Activated CD4-positive, alpha-beta memory T cell treated with anti-CD3 and anti-CD28 coated beads for 36 hours (primary cell): ENCODE measurements at regions of chr2 and their contacts with region 1.

Region 1: GRCh38 chr2:73176881-73177644 is 25.3 kb upstream of the NOTO start:
- DNase-seq: peak; percentile 91
- H3K4me3 Mint-ChIP-seq: peak overlapping the region; percentile 77
- H3K27ac Mint-ChIP-seq: no peak overlapping the region
- H3K4me1 Mint-ChIP-seq: peaks cover 26% of the 10 kb centered on the region
- H3K27me3 Mint-ChIP-seq: peaks cover 31% of the 10 kb centered on the region

Region 2: GRCh38 chr2:72770879-72771461 is 406.1 kb before region 1 on chr2:
- CTCF ChIA-PET with region 1: interaction called, 3 read pairs
- POLR2A ChIA-PET with region 1: no interaction called
- intact Hi-C with region 1: loop called (anchors 5 kb)
- DNase-seq: peak; percentile 38
- H3K4me3 Mint-ChIP-seq: no peak overlapping the region
- H3K27ac Mint-ChIP-seq: no peak overlapping the region
- H3K4me1 Mint-ChIP-seq: no peaks in the 10 kb centered on the region
- H3K27me3 Mint-ChIP-seq: no peaks in the 10 kb centered on the region

Region 3: DNA sequence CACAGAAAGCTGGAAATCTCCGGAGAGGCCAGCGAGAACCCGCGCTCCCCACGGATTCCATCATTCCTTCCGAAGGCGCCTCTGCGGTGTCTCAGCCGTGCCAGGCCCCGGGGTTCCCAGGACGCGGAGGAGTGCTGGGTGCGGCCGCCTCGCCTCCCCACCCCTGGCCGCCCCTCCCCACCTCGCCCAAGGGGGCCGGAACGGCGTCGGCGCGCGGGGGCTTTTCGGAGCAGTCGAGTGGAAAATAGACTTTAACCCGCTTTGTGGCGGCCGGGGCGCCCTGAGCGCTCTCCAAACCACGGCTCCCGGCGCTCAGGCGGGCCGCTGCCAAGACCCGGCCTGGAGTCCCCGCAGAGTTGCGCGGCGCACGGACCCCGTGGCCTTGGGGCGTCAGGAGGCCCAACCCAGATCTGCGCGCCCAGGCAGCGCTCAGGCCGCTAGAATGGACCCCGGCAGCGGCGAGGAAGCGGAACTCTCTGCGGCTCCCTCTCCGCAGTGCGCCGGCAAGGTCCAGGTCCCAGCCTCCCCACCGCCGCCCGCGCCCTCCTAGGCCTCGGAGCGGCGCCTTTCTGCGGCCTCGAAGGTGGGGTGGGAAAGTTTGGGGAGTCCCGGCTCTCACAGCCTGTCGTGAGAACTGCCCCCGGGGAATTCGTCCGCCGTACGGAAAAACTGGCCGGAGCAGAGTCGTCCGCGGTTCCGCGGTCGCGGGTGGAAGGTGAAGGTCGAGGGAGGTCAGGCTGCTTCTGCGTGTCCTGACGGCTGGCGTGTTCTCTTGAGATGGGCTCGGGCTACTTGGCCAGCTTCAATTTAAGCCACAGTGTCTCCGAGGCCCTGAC is 260.9 kb before region 1 on chr2:
- CTCF ChIA-PET with region 1: interaction called, 10 read pairs
- POLR2A ChIA-PET with region 1: no interaction called
- intact Hi-C with region 1: no loop called
- DNase-seq: peak; percentile 61
- H3K4me3 Mint-ChIP-seq: peak overlapping the region; percentile 66
- H3K27ac Mint-ChIP-seq: no peak overlapping the region
- H3K4me1 Mint-ChIP-seq: peaks cover 26% of the 10 kb centered on the region
- H3K27me3 Mint-ChIP-seq: peaks cover 73% of the 10 kb centered on the region

Region 4: DNA sequence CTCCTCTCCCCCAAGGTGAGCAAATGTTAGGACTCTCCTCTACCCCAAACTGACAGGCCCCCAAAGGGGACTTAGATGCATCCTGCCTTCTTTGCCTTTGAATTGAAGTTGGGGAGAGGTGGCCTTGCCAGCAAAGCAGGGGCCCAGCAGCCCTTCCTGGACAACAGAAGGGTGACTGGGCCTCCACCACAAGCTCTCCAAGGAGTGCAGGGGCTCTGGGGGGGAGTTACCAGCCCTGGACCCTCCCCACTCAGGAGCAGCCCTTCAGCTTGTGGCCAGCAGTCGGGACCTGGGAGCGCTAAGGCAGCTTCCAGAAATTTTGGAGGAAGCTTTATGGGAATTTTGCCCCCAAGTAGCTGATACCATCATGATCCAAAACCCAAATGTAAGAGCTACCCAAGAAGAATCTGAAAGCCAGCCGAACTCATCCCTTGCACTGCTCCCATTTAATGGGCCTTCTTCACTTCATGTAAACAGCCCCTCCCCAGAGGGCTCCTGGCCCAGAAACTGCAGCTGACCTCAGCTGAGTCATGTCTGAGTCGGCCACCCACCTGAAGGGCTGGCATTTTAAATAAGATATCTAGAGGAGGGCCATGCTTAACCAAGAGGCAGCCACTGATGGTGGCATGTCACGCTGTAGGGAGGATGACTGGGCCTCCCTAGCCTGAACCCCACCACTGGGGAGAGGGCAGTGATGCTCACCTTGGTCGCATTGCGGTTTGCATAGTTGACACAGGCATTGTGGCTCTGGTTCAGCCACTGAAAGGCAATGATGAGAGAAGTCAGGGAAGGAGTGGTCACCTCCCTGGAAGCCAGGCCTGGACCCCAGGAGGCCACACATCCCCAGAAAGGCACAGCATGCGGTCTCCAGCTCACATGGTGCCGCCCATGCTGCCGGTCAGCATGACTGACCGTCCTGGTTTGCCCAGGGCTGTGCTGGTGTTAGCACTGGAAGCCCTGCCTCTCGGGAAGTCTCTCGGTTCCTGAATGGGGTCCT is 177.0 kb before region 1 on chr2:
- CTCF ChIA-PET with region 1: interaction called, 113 read pairs
- POLR2A ChIA-PET with region 1: no interaction called
- intact Hi-C with region 1: no loop called
- DNase-seq: peak; percentile 15
- H3K4me3 Mint-ChIP-seq: no peak overlapping the region
- H3K27ac Mint-ChIP-seq: no peak overlapping the region
- H3K4me1 Mint-ChIP-seq: no peaks in the 10 kb centered on the region
- H3K27me3 Mint-ChIP-seq: no peaks in the 10 kb centered on the region

Region 5: GRCh38 chr2:73071360-73072133 is 105.5 kb before region 1 on chr2 and contains the start of gene SFXN5:
- CTCF ChIA-PET with region 1: interaction called, 27 read pairs
- POLR2A ChIA-PET with region 1: interaction called, 3 read pairs
- intact Hi-C with region 1: loop called (anchors 1 kb)
- DNase-seq: peak; percentile 97
- H3K4me3 Mint-ChIP-seq: peak within 1 kb of the TSS; percentile 80
- H3K27ac Mint-ChIP-seq: peak within 1 kb of the TSS; percentile 71
- H3K4me1 Mint-ChIP-seq: peaks cover 23% of the 10 kb centered on the region
- H3K27me3 Mint-ChIP-seq: no peaks in the 10 kb centered on the region
- total RNA-seq, gene SFXN5: 4.5 to 7.6 TPM

Region 6: DNA sequence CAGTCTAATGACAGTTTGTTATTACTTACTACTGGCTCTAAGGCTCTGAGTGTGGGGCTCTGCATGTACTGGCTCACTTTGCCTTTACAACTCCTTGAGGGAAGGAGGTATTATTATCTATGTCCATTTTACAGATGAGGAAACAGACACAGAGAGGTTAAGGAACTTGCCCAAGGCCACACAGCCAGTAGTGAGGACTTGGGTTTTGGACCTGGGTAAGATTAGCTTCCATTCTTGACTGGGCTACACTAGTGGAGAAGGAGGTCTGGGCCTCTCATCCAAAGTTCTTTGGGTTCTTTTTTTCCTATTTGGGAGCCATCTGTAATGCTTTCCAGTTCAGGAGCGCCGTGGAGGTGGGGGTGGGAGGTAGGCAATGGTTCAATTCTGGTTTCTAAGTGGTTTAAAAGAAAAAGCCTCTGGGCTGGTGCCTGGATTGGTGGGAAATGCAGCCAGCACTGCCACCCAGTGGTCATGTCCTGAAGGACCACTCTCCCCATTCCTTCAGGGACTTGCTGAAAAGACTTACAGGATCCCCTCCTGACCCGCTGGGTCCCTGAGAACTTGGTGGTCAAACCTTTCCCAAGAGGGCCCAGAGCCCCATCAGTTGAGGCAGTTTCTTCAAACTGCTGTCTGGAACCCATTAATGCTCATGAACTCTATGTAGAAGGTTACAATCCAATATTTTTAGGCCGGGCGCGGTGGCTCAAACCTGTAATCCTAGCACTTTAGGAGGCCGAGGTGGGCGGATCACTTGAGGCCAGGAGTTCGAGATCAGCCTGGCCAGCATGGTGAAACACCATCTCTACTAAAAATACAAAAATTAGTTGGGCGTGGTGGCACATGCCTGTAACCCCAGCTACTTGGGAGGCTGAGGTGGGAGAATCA is 13.3 kb before region 1 on chr2:
- CTCF ChIA-PET with region 1: interaction called, 14 read pairs
- POLR2A ChIA-PET with region 1: interaction called, 3 read pairs
- intact Hi-C with region 1: loop called (anchors 1 kb)
- DNase-seq: peak; percentile 81
- H3K4me3 Mint-ChIP-seq: no peak overlapping the region
- H3K27ac Mint-ChIP-seq: no peak overlapping the region
- H3K4me1 Mint-ChIP-seq: peaks cover 2% of the 10 kb centered on the region
- H3K27me3 Mint-ChIP-seq: peaks cover 7% of the 10 kb centered on the region

Region 7: GRCh38 chr2:73212448-73213176 is 35.5 kb after region 1 on chr2:
- CTCF ChIA-PET with region 1: interaction called, 158 read pairs
- POLR2A ChIA-PET with region 1: interaction called, 4 read pairs
- intact Hi-C with region 1: loop called (anchors 1 kb)
- DNase-seq: peak; percentile 86
- H3K4me3 Mint-ChIP-seq: no peak overlapping the region
- H3K27ac Mint-ChIP-seq: no peak overlapping the region
- H3K4me1 Mint-ChIP-seq: peaks cover 39% of the 10 kb centered on the region
- H3K27me3 Mint-ChIP-seq: peaks cover 5% of the 10 kb centered on the region

Region 8: GRCh38 chr2:73283545-73284295 is 106.7 kb after region 1 on chr2:
- CTCF ChIA-PET with region 1: no interaction called
- POLR2A ChIA-PET with region 1: no interaction called
- intact Hi-C with region 1: no loop called
- DNase-seq: peak; percentile 40
- H3K4me3 Mint-ChIP-seq: peak overlapping the region; percentile 77
- H3K27ac Mint-ChIP-seq: peak overlapping the region; percentile 70
- H3K4me1 Mint-ChIP-seq: peaks cover 10% of the 10 kb centered on the region
- H3K27me3 Mint-ChIP-seq: peaks cover 7% of the 10 kb centered on the region

Region 9: DNA sequence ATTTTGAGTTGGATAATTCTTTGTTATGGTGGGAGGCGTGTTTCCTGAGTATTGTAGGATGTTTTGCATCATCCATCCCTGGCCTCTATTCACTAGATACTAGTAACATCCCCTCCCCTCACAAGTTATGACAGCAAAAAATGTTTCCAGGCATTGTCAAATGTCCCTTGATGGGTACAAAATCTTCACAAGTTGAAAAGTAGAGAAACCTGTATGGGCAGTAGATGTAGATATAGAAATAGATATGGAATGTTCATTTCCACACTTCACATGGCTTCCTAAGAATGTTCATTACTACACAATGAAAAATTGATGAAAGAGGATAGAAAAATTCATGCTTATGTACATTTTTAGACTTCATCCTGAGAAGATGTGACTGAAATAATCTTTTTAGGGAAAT is 254.0 kb after region 1 on chr2:
- CTCF ChIA-PET with region 1: no interaction called
- POLR2A ChIA-PET with region 1: no interaction called
- intact Hi-C with region 1: no loop called
- DNase-seq: no peak
- H3K4me3 Mint-ChIP-seq: no peak overlapping the region
- H3K27ac Mint-ChIP-seq: no peak overlapping the region
- H3K4me1 Mint-ChIP-seq: no peaks in the 10 kb centered on the region
- H3K27me3 Mint-ChIP-seq: no peaks in the 10 kb centered on the region